ENCODE measurements at regions of chr14 and their contacts with region 1.

Region 1: DNA sequence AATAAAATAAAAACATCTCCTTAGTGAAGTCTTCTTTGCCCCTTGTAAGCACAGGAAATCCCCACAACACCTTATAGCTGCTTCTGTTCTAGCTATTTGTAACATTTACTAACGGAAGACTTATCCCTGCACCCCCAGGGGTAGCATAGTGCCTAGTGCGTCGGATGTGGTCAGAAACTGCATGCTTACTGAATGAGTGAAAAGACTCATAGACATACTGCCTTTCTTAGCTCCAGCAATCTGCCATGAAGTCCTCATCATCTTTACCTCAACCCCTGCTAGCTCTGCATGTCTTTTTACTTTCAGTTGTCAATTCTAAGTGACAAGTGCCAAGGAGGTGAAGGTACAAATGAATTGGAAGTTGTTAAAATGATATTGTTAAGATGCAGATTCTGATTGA is 12.9 kb downstream of the RIOX1 start:
- DNase-seq: no peak
- H3K4me3 Mint-ChIP-seq: no peak overlapping the region
- H3K27ac Mint-ChIP-seq: no peak overlapping the region
- H3K4me1 Mint-ChIP-seq: no peaks in the 10 kb centered on the region
- H3K27me3 Mint-ChIP-seq: no peaks in the 10 kb centered on the region
- CTCF ChIP-seq: no peak

Region 2: DNA sequence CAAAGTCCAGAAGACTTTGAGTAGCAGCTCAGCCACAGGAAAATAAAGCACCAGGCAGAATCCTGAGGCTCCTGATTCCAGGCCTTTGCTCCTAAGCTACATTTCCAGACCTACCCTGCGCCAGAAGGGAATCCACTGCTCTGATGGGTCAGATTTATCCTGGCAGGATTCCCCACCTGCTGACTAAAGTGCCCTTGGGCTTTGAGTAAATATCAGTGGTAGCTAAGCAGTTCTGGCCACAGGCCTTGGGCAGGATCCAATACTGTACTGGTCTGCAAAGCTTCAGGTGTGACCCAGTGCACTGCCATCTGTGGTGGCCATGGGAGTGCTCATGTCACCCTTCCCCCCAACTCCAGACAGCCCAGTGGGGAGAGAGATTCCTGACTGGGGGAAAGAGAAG is 22.9 kb after region 1 on chr14:
- CTCF ChIA-PET with region 1: interaction called, 43 read pairs
- POLR2A ChIA-PET with region 1: no interaction called
- intact Hi-C with region 1: no loop called
- DNase-seq: peak; percentile 75
- H3K4me3 Mint-ChIP-seq: no peak overlapping the region
- H3K27ac Mint-ChIP-seq: peak overlapping the region; percentile 67
- H3K4me1 Mint-ChIP-seq: peaks cover 17% of the 10 kb centered on the region
- H3K27me3 Mint-ChIP-seq: no peaks in the 10 kb centered on the region
- CTCF ChIP-seq: no peak

Region 3: GRCh38 chr14:73627151-73627558 is 123.5 kb after region 1 on chr14:
- CTCF ChIA-PET with region 1: interaction called, 162 read pairs
- POLR2A ChIA-PET with region 1: no interaction called
- intact Hi-C with region 1: no loop called
- DNase-seq: no peak
- H3K4me3 Mint-ChIP-seq: no peak overlapping the region
- H3K27ac Mint-ChIP-seq: no peak overlapping the region
- H3K4me1 Mint-ChIP-seq: no peaks in the 10 kb centered on the region
- H3K27me3 Mint-ChIP-seq: no peaks in the 10 kb centered on the region
- CTCF ChIP-seq: no peak

Region 4: GRCh38 chr14:73662487-73662943 is 158.9 kb after region 1 on chr14:
- CTCF ChIA-PET with region 1: interaction called, 5 read pairs
- POLR2A ChIA-PET with region 1: no interaction called
- intact Hi-C with region 1: loop called (anchors 1 kb)
- DNase-seq: peak; percentile 93
- H3K4me3 Mint-ChIP-seq: no peak overlapping the region
- H3K27ac Mint-ChIP-seq: peak overlapping the region; percentile 7
- H3K4me1 Mint-ChIP-seq: peaks cover 10% of the 10 kb centered on the region
- H3K27me3 Mint-ChIP-seq: no peaks in the 10 kb centered on the region
- CTCF ChIP-seq: peak; percentile 45

Region 5: DNA sequence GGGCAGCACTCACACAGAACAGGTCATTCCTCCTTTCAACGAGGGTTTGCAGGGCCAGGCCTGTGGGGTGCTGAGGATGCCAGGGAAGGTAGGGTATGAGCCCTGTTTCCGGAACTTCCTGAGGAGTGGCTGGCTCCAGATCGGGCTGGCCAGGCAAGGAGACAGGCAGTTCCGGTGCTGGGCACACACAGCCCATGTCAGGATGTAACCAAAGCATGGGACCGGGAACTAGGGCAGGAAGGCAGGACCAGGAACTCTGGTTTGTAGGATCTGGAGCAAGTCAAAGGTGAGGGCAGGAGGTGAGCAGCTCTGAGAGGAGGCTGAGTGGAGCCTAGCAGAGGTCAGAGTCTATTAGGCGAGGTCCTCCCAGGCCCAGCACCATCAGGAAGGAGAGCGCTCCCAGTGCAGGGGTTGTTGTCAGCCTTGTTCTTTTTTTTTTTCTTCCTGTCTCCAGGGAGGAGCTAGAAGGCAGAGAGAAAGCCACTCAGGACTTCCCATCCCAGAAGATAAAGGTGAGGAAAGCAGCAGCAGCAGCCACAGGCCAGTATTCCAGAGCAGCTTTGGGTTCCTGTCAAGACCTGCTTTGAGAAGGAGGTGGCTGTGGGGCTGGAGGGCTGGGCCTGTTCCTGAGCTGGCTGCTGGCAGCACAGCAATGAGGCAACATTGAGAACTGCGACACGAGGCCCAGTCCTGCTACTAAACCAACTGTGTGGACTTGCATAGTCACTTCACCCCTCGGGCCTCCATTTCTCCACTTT is 299.0 kb after region 1 on chr14:
- CTCF ChIA-PET with region 1: no interaction called
- POLR2A ChIA-PET with region 1: no interaction called
- intact Hi-C with region 1: no loop called
- DNase-seq: peak; percentile 80
- H3K4me3 Mint-ChIP-seq: peak overlapping the region; percentile 47
- H3K27ac Mint-ChIP-seq: peak overlapping the region; percentile 86
- H3K4me1 Mint-ChIP-seq: peaks cover 25% of the 10 kb centered on the region
- H3K27me3 Mint-ChIP-seq: no peaks in the 10 kb centered on the region
- CTCF ChIP-seq: no peak